Activated CD4-positive, alpha-beta T cell treated with anti-CD3 and anti-CD28 coated beads for 36 hours (primary cell): ENCODE measurements at regions of chr11 and their contacts with region 1.

Region 1: GRCh38 chr11:65418711-65419459 is 3.7 kb upstream of the NEAT1 start:
- DNase-seq: peak; percentile 97
- ATAC-seq: peak; percentile 48
- H3K4me3 Mint-ChIP-seq: peak overlapping the region; percentile 100
- H3K27ac Mint-ChIP-seq: peak overlapping the region; percentile 99
- H3K4me1 Mint-ChIP-seq: peaks cover 34% of the 10 kb centered on the region
- H3K27me3 Mint-ChIP-seq: peaks cover 6% of the 10 kb centered on the region

Region 2: DNA sequence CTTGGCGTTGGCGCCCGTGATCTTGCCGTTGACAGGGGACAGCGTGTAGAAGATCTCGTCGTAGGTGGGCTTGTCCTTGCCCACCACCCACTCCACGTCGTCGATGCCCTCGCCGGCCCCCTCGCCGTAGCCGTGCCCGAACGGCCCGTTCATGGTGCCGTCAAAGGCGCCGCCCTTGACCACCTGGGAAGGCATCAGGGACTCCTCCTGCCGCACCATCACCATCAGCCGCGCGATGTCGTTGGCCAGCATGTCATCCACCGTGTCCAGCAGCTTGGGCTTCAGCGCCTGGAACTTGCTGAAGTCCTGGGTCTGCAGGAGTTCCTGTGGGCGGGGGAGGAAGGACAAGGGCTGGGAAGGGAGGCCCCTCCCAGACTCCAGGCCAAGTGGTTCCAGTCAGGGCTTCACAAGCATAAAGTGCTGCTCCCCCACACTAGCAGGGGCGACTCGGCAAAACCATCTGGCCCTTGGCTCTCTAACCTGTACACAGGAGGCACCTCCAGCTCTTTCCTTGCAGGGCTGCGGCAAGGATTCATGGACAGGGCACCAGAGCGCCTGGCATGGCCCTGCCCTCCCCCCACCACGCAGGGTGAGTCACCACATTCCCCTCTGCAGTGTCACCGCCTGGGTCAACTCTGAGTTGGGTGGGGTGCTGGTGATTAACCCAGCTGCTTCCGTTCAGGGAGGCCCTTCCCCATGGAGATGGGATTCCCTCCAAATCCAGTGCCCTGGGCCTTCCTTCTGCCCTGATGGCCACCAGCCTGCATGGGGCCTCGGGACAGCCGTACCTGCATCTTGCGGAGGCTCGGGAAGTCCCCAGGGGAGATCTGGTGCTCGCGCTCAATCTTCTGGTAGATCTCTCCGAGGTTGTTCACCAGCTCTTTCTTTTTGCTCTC is 564.1 kb before region 1 on chr11:
- CTCF ChIA-PET with region 1: no interaction called
- POLR2A ChIA-PET with region 1: no interaction called
- intact Hi-C with region 1: loop called in 1 of 2 experiments (anchors 5 kb)
- DNase-seq: peak; percentile 65
- ATAC-seq: no peak
- H3K4me3 Mint-ChIP-seq: peak overlapping the region; percentile 45
- H3K27ac Mint-ChIP-seq: peak overlapping the region; percentile 84
- H3K4me1 Mint-ChIP-seq: peaks cover 92% of the 10 kb centered on the region
- H3K27me3 Mint-ChIP-seq: no peaks in the 10 kb centered on the region

Region 3: DNA sequence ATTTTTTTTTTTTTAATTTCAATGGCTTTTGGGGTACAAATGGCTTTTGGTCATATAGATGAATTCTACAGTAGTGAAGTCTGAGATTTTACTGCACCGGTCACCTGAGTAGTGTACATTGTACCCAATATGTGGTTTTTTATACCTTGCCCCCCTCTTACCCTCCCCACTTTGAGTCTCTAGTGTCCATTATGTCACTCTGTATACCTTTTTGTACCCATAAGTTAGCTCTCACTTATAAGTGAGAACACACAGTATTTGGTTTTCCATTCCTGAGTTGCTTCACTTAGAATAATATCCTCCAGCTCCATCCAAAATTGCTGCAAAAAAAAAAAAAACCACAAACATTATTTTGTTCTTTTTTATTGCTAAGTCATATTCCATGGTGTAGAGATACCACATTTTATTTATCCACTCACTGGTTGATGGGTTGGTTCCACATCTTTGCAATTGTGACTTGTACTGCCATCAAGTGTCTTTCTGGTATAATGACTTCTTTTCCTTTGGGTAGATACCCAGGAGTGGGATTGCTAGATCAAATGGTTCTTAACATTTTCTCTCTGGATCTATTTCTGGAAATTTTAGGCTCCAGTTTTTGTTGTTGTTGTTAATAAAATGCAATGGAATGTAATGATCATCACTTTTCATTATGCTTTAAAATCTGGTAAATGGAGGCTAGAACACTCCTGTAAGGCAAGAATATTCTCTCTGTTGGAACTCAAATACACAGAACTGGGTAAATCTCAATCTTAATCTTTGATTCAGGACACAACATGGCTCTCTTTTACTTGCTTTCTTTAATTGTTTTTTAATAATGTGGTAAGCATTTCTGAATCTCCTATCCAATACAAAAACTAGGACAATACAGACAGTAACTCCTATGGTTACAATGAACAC is 14.0 kb after region 1 on chr11:
- CTCF ChIA-PET with region 1: interaction called, 7 read pairs
- POLR2A ChIA-PET with region 1: interaction called, 7 read pairs
- intact Hi-C with region 1: loop called (anchors 1 kb)
- DNase-seq: peak; percentile 2
- ATAC-seq: no peak
- H3K4me3 Mint-ChIP-seq: peak overlapping the region; percentile 18
- H3K27ac Mint-ChIP-seq: peak overlapping the region; percentile 35
- H3K4me1 Mint-ChIP-seq: peaks cover 86% of the 10 kb centered on the region
- H3K27me3 Mint-ChIP-seq: no peaks in the 10 kb centered on the region

Region 4: GRCh38 chr11:65477149-65477965 is 58.5 kb after region 1 on chr11:
- CTCF ChIA-PET with region 1: interaction called, 4 read pairs
- POLR2A ChIA-PET with region 1: interaction called, 116 read pairs
- intact Hi-C with region 1: loop called in 1 of 2 experiments (anchors 1 kb)
- DNase-seq: peak; percentile 96
- ATAC-seq: peak; percentile 88
- H3K4me3 Mint-ChIP-seq: peak overlapping the region; percentile 97
- H3K27ac Mint-ChIP-seq: peak overlapping the region; percentile 98
- H3K4me1 Mint-ChIP-seq: peaks cover 34% of the 10 kb centered on the region
- H3K27me3 Mint-ChIP-seq: no peaks in the 10 kb centered on the region

Region 5: DNA sequence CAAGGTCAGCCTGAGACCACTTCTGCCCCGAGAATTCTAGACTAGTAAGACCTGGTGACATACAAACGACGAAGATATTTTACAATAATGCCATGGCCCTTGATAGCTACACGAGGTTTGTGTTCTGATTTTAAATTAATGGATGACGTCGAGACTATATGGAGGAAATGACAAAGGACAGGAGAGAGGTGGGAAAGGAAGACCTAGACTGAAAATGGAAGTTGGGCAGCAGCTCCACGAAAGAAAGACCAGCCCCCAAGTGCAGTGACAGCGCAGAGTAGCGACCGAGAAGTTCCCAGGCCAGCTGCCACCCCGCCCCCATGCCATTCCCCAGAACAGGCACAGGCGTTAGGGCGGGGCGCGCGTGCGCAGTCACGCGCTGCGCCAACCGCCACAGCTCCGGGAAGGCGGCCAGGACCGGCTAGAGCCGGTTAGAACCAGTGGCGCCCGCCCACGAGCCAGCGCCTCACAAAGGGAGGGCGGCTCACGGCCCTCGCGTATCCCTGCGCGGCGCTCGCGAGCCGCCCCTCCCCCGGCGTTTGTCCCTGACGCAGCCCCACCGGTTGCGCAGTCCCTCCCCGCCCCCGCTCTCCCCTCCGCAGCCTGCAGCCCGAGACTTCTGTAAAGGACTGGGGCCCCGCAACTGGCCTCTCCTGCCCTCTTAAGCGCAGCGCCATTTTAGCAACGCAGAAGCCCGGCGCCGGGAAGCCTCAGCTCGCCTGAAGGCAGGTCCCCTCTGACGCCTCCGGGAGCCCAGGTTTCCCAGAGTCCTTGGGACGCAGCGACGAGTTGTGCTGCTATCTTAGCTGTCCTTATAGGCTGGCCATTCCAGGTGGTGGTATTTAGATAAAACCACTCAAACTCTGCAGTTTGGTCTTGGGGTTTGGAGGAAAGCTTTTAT is 78.5 kb after region 1 on chr11:
- CTCF ChIA-PET with region 1: interaction called, 90 read pairs
- POLR2A ChIA-PET with region 1: interaction called, 1,637 read pairs
- intact Hi-C with region 1: loop called (anchors 1 kb)
- DNase-seq: peak; percentile 100
- ATAC-seq: peak; percentile 70
- H3K4me3 Mint-ChIP-seq: no peak overlapping the region
- H3K27ac Mint-ChIP-seq: peak overlapping the region; percentile 96
- H3K4me1 Mint-ChIP-seq: peaks cover 41% of the 10 kb centered on the region
- H3K27me3 Mint-ChIP-seq: no peaks in the 10 kb centered on the region

Region 6: DNA sequence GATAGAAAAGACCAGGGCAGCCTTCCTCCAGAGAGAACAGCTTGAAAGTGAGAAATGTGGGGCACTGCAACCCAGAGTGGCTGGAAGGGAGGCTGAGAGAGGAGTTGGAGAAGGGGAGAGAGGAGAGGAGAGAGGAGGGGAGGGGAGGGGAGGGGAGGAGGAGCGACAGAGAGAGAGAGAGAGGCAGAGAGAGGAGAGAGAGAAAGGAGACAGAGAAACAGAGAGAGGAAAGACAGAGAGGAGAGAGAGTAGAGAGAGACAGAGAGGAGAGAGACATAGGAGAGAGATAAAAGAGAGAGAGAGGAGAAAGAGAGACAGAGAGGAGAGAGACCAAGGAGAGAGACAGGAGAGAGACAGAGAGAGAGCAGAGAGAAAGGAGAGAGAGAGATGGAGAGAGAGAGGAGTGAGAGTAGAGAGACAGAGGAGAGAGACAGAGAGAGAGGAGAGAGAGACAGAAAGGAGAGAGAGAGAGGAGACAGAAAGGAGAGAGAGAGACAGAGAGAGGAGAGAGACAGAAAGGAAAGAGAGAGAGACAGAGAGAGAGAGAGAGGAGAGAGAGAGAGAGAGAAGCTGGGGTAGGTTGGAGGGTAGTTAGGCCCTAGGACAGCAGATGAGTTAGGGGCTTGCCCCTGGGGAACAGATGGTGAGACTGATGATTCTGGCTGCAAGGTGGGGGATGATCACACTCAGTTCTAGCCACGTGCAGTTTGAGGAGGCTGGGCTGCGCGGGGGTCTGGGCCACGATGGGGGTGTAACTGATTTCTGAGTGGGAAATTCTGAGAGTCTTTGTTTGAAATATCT is 97.5 kb after region 1 on chr11:
- CTCF ChIA-PET with region 1: interaction called, 209 read pairs
- POLR2A ChIA-PET with region 1: no interaction called
- intact Hi-C with region 1: no loop called
- DNase-seq: no peak
- ATAC-seq: peak; percentile 58
- H3K4me3 Mint-ChIP-seq: no peak overlapping the region
- H3K27ac Mint-ChIP-seq: no peak overlapping the region
- H3K4me1 Mint-ChIP-seq: peaks cover 8% of the 10 kb centered on the region
- H3K27me3 Mint-ChIP-seq: no peaks in the 10 kb centered on the region